Panc1 (cell line): ENCODE measurements at regions of chr7 and their contacts with region 1.

Region 1: GRCh38 chr7:22559829-22560489 is 60.0 kb upstream of the STEAP1B start:
- DNase-seq: peak; percentile 86
- ATAC-seq: peak; percentile 66
- H3K4me3 ChIP-seq: no peak overlapping the region
- H3K27ac ChIP-seq: peak overlapping the region; percentile 85; the same call in 1 of the 2 replicates
- H3K4me1 ChIP-seq: peaks cover 44% of the 10 kb centered on the region
- H3K27me3 ChIP-seq: no peaks in the 10 kb centered on the region
- CTCF ChIP-seq: peak; percentile 96

Region 2: GRCh38 chr7:22633954-22634474 is 74.1 kb after region 1 on chr7:
- CTCF ChIA-PET with region 1: no interaction called
- POLR2A ChIA-PET with region 1: no interaction called
- in situ Hi-C with region 1: no loop called
- intact Hi-C with region 1: no loop called
- DNase-seq: no peak
- ATAC-seq: no peak
- H3K4me3 ChIP-seq: no peak overlapping the region
- H3K27ac ChIP-seq: no peak overlapping the region
- H3K4me1 ChIP-seq: no peaks in the 10 kb centered on the region
- H3K27me3 ChIP-seq: no peaks in the 10 kb centered on the region
- CTCF ChIP-seq: no peak

Region 3: DNA sequence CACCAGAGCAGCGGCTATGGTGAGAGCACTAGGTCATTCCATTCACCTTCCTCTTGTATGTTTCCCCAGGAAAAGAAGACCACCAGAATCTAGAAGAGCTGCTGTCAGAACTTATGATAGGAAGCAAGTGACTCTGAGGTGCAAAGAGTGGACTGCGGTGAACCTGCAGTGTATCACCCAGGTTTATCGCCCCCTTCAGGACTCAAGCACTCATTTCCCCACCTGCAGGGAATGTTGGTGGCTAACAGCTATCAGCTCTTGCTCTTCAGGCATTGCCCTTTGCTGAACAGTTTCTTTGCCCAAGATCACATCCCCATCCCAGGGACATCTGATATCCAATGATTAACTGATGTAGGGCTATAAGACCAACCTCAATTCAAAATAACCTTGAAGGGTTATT is 100.8 kb after region 1 on chr7:
- CTCF ChIA-PET with region 1: no interaction called
- POLR2A ChIA-PET with region 1: no interaction called
- in situ Hi-C with region 1: no loop called
- intact Hi-C with region 1: loop called (anchors 5 kb)
- DNase-seq: no peak
- ATAC-seq: no peak
- H3K4me3 ChIP-seq: no peak overlapping the region
- H3K27ac ChIP-seq: no peak overlapping the region
- H3K4me1 ChIP-seq: no peaks in the 10 kb centered on the region
- H3K27me3 ChIP-seq: no peaks in the 10 kb centered on the region
- CTCF ChIP-seq: peak; percentile 57

Region 4: GRCh38 chr7:22726345-22727185 is 166.6 kb after region 1 on chr7:
- CTCF ChIA-PET with region 1: interaction called, 98 read pairs
- POLR2A ChIA-PET with region 1: interaction called, 4 read pairs
- in situ Hi-C with region 1: no loop called
- intact Hi-C with region 1: loop called (anchors 1 kb)
- DNase-seq: no peak
- ATAC-seq: peak; percentile 83
- H3K4me3 ChIP-seq: no peak overlapping the region
- H3K27ac ChIP-seq: peak overlapping the region; percentile 62
- H3K4me1 ChIP-seq: peaks cover 24% of the 10 kb centered on the region
- H3K27me3 ChIP-seq: no peaks in the 10 kb centered on the region
- CTCF ChIP-seq: peak; percentile 88

Region 5: GRCh38 chr7:22782616-22783232 is 222.8 kb after region 1 on chr7:
- CTCF ChIA-PET with region 1: interaction called, 10 read pairs
- POLR2A ChIA-PET with region 1: interaction called, 3 read pairs
- in situ Hi-C with region 1: no loop called
- intact Hi-C with region 1: loop called (anchors 2 kb)
- DNase-seq: peak; percentile 53
- ATAC-seq: peak; percentile 93
- H3K4me3 ChIP-seq: no peak overlapping the region
- H3K27ac ChIP-seq: no peak overlapping the region
- H3K4me1 ChIP-seq: no peaks in the 10 kb centered on the region
- H3K27me3 ChIP-seq: no peaks in the 10 kb centered on the region
- CTCF ChIP-seq: peak; percentile 95

Region 6: GRCh38 chr7:22822486-22823141 is 262.7 kb after region 1 on chr7 and contains the start of gene TOMM7:
- CTCF ChIA-PET with region 1: interaction called, 4 read pairs
- POLR2A ChIA-PET with region 1: no interaction called
- in situ Hi-C with region 1: no loop called
- intact Hi-C with region 1: loop called (anchors 5 kb)
- DNase-seq: peak; percentile 98
- ATAC-seq: peak; percentile 93
- H3K4me3 ChIP-seq: peak within 1 kb of the TSS; percentile 81 to 100
- H3K27ac ChIP-seq: peak within 1 kb of the TSS; percentile 97
- H3K4me1 ChIP-seq: peaks cover 18% of the 10 kb centered on the region
- H3K27me3 ChIP-seq: no peaks in the 10 kb centered on the region
- CTCF ChIP-seq: peak; percentile 46
- total RNA-seq, gene TOMM7: 295 TPM

Region 7: GRCh38 chr7:22860784-22861482 is 301.0 kb after region 1 on chr7:
- CTCF ChIA-PET with region 1: interaction called, 5 read pairs
- POLR2A ChIA-PET with region 1: no interaction called
- in situ Hi-C with region 1: no loop called
- intact Hi-C with region 1: loop called (anchors 2 kb)
- DNase-seq: no peak
- ATAC-seq: peak; percentile 58
- H3K4me3 ChIP-seq: no peak overlapping the region
- H3K27ac ChIP-seq: no peak overlapping the region
- H3K4me1 ChIP-seq: peaks cover 24% of the 10 kb centered on the region
- H3K27me3 ChIP-seq: no peaks in the 10 kb centered on the region
- CTCF ChIP-seq: peak; percentile 85

Region 8: DNA sequence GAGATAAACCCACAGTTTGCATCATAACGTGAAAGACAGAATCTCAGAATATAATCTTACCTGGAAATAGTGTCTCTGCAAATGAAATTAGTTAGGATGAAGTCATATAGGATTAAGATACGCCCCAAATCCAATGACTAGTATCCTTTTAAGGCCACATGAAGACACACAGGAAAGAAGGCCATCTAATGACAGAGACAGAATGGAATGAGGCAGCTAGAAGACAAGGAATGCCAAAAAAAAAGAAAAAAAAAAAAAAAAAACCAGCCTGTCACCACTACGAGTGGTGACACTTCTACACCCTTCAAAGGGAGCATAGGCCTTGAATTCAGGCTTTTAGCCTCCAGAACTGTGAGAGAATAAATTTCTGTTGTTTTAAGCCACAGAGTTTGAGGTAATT is 371.1 kb after region 1 on chr7:
- CTCF ChIA-PET with region 1: no interaction called
- POLR2A ChIA-PET with region 1: no interaction called
- in situ Hi-C with region 1: no loop called
- intact Hi-C with region 1: no loop called
- DNase-seq: no peak
- ATAC-seq: no peak
- H3K4me3 ChIP-seq: no peak overlapping the region
- H3K27ac ChIP-seq: no peak overlapping the region
- H3K4me1 ChIP-seq: no peaks in the 10 kb centered on the region
- H3K27me3 ChIP-seq: no peaks in the 10 kb centered on the region
- CTCF ChIP-seq: no peak

Region 9: DNA sequence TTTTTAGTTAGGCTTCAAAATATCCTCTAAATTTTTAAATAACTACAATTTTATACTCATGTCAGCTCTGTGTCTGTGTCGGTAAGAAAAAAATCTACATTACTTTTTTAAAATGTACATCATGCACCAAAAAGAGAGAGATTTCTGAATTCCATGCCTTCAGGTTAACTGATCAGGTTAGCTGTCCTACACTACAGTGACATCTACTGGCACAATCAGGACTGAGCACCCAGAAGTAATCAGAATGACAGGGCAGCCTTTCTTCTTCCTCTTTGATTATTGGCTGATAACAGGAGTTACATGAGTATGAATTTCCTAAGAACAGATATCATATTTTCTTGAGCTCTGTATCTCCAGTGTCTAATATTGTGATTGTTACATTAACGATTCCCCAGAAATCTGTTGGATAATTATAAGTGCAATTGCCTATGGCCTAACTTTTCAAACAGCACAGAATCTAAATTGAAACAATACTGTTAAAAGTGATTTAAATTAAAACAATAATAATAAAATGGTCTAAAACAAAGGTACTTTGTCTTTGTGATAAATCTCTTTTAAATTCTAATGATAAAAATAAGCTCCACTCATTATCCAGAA is 495.7 kb after region 1 on chr7:
- CTCF ChIA-PET with region 1: interaction called, 14 read pairs
- POLR2A ChIA-PET with region 1: interaction called, 3 read pairs
- in situ Hi-C with region 1: no loop called
- intact Hi-C with region 1: loop called (anchors 1 kb)
- DNase-seq: peak; percentile 61
- ATAC-seq: peak; percentile 92
- H3K4me3 ChIP-seq: no peak overlapping the region
- H3K27ac ChIP-seq: no peak overlapping the region
- H3K4me1 ChIP-seq: no peaks in the 10 kb centered on the region
- H3K27me3 ChIP-seq: no peaks in the 10 kb centered on the region
- CTCF ChIP-seq: peak; percentile 93; the same call in 1 of the 2 replicates